ENCODE measurements at regions of chr4 and their contacts with region 1.

Region 1: GRCh38 chr4:44726262-44726871 is at the start of gene GNPDA2:
- DNase-seq: peak; percentile 89
- ATAC-seq: peak; percentile 94
- H3K4me3 Mint-ChIP-seq: peak within 1 kb of the TSS; percentile 88
- H3K27ac Mint-ChIP-seq: peak within 1 kb of the TSS; percentile 89
- H3K4me1 Mint-ChIP-seq: peaks cover 34% of the 10 kb centered on the region
- H3K27me3 Mint-ChIP-seq: peaks cover under 1% of the 10 kb centered on the region
- total RNA-seq, gene GNPDA2: 12.8 to 13.8 TPM

Region 2: DNA sequence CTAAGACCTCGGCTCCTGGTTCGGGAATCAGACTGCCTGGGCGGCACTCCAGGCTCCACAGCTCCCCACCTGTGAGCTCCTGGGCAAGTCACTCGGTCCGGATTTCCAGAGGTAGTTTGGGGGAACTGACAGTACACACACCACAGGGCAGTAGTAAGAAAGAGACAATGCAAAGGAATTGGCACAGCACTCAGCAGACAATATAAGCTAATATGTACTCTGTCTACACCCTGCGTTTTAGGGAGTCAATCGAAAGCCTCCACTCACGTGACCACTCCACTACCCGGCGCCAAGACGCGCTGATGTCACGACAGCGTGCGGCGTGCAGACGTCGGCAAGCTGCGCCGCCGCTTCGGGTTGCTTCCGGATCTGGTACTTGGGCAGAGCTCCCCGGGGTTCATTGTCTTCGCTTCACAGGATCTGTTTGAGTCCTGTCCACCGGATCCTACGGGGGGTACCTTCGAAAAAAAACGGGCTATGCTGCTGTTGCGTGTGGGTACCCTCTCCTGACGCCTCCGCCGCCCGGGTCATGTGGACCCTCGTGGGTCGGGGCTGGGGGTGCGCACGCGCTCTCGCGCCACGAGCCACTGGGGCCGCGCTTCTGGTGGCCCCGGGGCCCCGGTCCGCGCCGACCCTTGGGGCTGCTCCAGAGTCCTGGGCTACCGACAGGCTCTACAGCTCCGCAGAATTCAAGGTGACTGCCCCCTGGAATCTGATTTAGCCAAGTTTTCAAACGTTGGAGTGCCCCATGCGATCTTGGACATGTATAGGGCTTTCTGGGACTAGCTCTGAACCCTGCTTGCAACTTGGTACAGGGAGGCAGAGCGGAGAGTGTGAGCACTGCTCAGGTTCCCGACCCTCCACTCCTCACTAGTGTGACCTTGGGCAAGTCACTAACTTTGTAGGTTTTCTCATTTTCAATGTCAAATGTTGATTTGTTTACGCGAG is 48.0 kb before region 1 on chr4 and contains the start of gene GUF1:
- CTCF ChIA-PET with region 1: interaction called, 3 read pairs
- POLR2A ChIA-PET with region 1: interaction called, 7 read pairs
- intact Hi-C with region 1: loop called (anchors 1 to 2 kb)
- DNase-seq: peak; percentile 94
- ATAC-seq: peak; percentile 92
- H3K4me3 Mint-ChIP-seq: peak within 1 kb of the TSS; percentile 87
- H3K27ac Mint-ChIP-seq: peak within 1 kb of the TSS; percentile 93
- H3K4me1 Mint-ChIP-seq: peaks cover 34% of the 10 kb centered on the region
- H3K27me3 Mint-ChIP-seq: no peaks in the 10 kb centered on the region
- total RNA-seq, gene GUF1: 38.3 to 46.7 TPM

Region 3: DNA sequence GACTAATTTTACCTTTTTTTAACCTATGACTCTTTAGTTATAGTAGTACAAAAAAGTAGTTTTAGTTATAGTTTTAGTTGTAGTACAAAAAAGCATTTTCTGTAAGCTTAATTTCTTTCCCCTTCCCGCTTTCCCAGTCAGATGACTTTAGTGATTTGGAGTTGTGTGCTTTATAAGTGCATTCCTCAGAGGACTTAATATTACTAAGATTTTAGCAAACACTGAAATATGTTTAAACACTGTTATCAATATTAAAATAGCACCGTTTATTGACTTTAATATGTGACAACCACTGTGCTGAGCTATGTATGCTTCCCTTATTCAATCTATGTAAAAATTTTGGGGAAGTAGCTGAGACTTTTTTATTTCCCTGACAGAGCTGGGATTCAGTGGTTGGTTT is 25.3 kb before region 1 on chr4:
- CTCF ChIA-PET with region 1: no interaction called
- POLR2A ChIA-PET with region 1: no interaction called
- intact Hi-C with region 1: loop called in 1 of 2 experiments (anchors 2 kb)
- DNase-seq: no peak
- ATAC-seq: no peak
- H3K4me3 Mint-ChIP-seq: no peak overlapping the region
- H3K27ac Mint-ChIP-seq: no peak overlapping the region
- H3K4me1 Mint-ChIP-seq: peaks cover 2% of the 10 kb centered on the region
- H3K27me3 Mint-ChIP-seq: no peaks in the 10 kb centered on the region